HEK293T (cell line): ENCODE measurements at regions of chr6 and their contacts with region 1.

Region 1: DNA sequence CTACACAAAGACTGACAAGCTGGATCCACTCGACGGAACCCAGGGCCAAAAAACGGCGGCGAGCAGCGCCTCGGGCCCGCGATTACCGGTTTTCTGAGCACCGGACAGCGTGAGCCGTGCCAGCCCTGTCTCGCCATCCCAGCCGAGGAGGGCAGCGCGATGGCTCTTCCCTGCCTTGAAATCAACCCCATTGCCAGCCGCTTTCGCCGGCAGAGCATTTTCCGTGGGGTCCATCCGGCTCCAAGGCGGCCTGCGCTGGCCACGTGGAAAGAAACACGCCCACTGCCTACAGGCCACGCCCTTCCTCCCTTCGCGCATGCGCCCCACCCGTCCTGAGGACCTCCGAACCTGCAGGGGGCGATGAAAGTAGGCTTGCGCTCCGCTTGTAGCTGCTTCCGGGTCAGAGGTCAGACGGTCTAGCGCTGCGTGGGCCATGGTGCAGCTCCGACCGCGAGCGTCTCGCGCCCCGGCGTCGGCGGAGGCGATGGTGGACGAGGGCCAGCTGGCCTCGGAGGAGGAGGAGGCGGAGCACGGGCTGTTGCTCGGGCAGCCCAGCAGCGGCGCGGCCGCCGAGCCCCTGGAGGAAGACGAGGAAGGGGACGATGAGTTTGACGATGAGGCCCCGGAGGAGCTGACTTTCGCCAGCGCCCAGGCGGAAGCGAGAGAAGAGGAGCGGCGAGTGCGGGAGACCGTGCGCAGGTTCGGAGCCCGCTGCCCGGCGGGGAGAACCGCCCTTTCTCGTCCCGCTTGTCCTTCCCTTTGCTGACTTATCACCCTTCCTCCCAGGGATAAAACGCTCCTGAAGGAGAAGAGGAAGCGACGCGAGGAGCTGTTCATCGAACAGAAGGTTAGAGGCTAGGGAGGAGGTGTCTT is at the start of gene NOL7:
- DNase-seq: peak; percentile 97

Region 2: DNA sequence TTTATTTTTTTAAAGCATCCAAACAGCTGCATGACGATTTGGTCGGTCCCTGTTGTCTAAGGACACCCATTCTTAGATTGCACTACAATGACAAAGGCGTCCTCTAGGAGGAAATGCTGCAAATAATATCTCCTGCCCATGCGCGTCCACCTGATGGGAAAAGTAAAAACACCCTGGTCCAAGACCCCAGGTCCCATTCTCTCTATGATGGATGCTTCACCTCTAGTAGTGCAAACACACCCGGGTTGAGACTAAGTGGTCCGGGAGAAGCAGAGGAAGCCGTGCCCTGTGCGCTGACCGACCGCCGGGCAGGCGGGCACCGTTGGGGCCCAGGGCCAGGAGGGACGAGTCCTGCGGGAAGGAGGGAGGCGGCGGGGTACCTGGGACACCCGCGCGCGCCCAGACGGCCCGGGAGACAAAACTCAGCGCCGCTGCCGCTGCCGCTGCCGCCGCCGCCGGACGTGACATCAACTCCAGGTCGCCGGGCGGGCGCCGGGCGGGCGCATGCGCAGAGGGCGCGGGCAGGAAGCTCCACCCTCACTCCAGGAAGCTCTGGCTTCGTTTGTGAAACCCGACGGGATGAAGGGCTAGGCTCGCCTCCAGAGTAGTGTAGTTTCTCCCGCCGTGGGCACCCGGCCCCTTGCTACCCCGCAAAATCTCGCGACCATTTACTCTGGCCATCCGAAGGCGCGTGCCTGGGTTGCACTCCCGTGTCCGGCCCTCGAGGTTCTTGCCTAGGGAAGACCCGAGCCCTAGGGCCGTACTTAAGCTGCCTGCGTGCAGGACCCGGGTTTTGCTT is 286.9 kb before region 1 on chr6 and contains the start of gene TBC1D7:
- CTCF ChIA-PET with region 1: no interaction called
- POLR2A ChIA-PET with region 1: interaction called, 12 read pairs
- DNase-seq: peak; percentile 94

Region 3: GRCh38 chr6:13454286-13455221 is 160.6 kb before region 1 on chr6:
- CTCF ChIA-PET with region 1: no interaction called
- POLR2A ChIA-PET with region 1: no interaction called
- DNase-seq: no peak

Region 4: DNA sequence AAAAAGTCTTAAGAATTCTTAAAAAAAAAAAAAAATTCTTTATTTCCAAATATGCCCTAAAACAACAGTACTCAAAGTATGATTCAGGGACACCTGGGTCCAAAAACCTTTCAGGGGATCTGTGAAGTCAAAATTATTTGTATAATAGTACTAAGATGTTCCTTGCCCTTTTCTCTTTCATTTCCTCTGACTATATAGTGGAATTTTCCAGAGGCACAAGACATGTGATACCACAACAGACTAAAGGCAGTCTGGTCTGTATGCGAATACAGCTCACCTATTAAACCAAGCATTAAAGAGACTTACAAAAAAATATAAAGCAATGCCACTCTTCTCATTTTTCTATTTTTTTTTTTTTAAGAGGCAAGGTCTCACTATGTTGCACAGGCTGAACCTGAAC is 15.3 kb after region 1 on chr6:
- CTCF ChIA-PET with region 1: interaction called, 3 read pairs
- POLR2A ChIA-PET with region 1: interaction called, 15 read pairs
- DNase-seq: no peak

Region 5: DNA sequence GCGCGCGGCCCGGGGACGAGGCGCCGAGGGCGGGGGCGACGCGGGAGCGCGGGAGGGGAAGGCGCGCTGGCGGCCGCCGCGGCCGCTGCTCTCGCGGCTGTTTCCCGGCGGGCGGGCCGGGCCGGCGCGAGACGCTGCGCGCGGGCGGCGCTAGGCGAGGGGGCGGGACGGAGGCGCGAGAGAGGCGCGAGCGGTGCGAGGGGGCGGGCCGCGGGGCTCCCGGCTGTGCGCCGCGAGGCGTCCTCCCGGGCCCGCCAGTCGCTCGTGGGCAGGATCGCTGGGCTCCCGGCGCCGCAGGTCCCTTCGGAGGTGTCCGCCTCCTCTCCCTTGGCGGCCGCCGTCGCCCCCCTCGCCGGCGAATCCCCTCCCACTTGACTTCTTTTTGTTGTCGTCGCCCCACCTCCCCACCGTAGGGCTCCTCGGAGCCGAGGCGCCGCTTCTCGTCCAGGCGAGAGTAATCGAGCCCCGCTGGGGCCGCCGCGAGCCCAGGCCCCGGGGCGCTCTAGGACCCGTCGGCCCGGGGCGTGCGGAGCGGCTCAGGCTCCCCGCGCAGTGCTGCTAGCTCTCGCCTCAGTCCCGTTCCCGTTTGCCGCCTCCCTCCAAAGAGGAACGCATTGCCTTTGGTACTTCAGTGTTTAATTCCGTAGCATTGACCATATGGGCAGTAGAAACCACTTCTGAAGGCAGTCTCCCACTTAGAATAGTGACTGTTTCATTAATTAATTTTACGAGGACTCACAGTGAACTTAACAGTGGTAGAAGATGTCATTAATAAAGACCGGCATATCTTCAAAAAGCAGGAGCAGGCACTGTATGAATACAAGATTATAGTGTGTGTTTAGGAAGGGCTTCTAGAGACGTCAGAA is 96.8 kb after region 1 on chr6 and contains the start of gene RANBP9:
- CTCF ChIA-PET with region 1: interaction called, 4 read pairs
- POLR2A ChIA-PET with region 1: interaction called, 27 read pairs
- DNase-seq: peak; percentile 84